Sigmoid colon (tissue), 7 donors: ENCODE measurements at regions of chr11 and their contacts with region 1.

Region 1: GRCh38 chr11:47466701-47467250 is 17.8 kb upstream of the RAPSN start:
- DNase-seq: peak; percentile 82
- H3K4me3 ChIP-seq: no peak overlapping the region
- H3K27ac ChIP-seq: peak overlapping the region; percentile 64 to 78 (median 71)
- H3K4me1 ChIP-seq: peaks cover 0 to 70% (median 64%) of the 10 kb centered on the region in 4 donors
- H3K27me3 ChIP-seq: no peaks in the 10 kb centered on the region
- CTCF ChIP-seq: no peak
- EP300 ChIP-seq: no peak
- POLR2A ChIP-seq: no peak

Region 2: DNA sequence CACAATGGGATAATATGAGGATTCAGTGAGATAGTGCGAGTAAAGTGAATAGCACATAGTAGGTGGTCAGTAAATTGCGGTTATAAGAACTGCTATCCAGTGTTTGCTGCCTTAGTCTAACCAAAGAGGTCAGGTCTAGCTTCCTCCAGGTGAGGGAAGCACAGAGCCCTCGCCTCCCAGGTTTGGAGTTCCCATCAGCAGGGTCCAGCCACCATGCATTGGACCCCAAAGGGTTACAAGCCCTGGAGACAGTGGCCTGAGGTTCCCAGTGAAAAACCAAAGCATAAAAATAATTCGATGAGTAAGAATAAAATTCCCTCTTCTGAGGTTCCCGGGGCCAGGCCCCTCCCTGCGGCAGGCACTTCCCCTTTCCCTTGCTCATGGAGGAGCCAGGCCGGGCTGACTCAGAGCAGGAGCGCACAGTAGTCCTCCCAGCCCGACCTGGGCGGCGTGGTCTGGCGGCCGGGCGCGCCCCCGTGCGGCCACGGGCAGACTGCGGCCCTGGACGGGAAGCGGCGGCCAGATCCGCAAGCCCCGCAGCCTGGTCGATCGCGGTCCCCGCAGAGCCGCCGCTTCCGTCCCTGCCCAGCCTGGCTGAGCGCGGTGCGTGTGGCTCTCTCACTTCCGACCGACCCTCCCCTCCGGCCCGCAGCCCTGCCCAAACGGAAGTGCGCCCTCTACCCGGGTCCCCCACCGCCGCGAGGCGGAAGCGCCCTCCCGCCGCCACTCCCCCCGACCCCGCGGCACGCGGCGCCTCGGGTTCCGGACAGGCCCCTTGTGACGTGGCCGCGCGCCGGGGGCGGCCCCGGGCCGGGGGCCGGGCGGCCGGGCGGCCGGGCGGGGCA is 58.8 kb before region 1 on chr11 and contains the start of gene SLC39A13:
- intact Hi-C with region 1: no loop called
- DNase-seq: peak; percentile 98
- H3K4me3 ChIP-seq: peak within 1 kb of the TSS; percentile 61 to 85 (median 77)
- H3K27ac ChIP-seq: peak within 1 kb of the TSS; percentile 84 to 96 (median 95)
- H3K4me1 ChIP-seq: peaks cover 0 to 44% (median 29%) of the 10 kb centered on the region in 4 donors
- H3K27me3 ChIP-seq: no peaks in the 10 kb centered on the region
- CTCF ChIP-seq: peak; percentile 30 to 75 (median 63)
- EP300 ChIP-seq: peak in 1 of 4 donors; percentile 20
- POLR2A ChIP-seq: peak; percentile 57 to 58
- total RNA-seq, gene SLC39A13: 38.2 to 87.5 (median 54.0) TPM

Region 3: GRCh38 chr11:47480762-47481161 is 14.0 kb after region 1 on chr11:
- intact Hi-C with region 1: no loop called
- DNase-seq: no peak
- H3K4me3 ChIP-seq: no peak overlapping the region
- H3K27ac ChIP-seq: no peak overlapping the region
- H3K4me1 ChIP-seq: no peaks in the 10 kb centered on the region
- H3K27me3 ChIP-seq: no peaks in the 10 kb centered on the region
- CTCF ChIP-seq: no peak
- EP300 ChIP-seq: no peak
- POLR2A ChIP-seq: no peak

Region 4: GRCh38 chr11:47499614-47500013 is 32.8 kb after region 1 on chr11:
- intact Hi-C with region 1: no loop called
- DNase-seq: no peak
- H3K4me3 ChIP-seq: no peak overlapping the region
- H3K27ac ChIP-seq: peak overlapping the region in 2 of 4 donors; percentile 41 to 44
- H3K4me1 ChIP-seq: peaks cover 0 to 89% (median 73%) of the 10 kb centered on the region in 4 donors
- H3K27me3 ChIP-seq: no peaks in the 10 kb centered on the region
- CTCF ChIP-seq: no peak
- EP300 ChIP-seq: no peak
- POLR2A ChIP-seq: no peak

Region 5: GRCh38 chr11:47565340-47566148 is 98.8 kb after region 1 on chr11 and contains the start of gene PTPMT1:
- intact Hi-C with region 1: loop called (anchors 5 kb)
- DNase-seq: peak; percentile 87
- H3K4me3 ChIP-seq: peak within 1 kb of the TSS; percentile 63 to 96 (median 80)
- H3K27ac ChIP-seq: peak within 1 kb of the TSS; percentile 72 to 89 (median 81)
- H3K4me1 ChIP-seq: peaks cover 0 to 20% (median 12%) of the 10 kb centered on the region in 4 donors
- H3K27me3 ChIP-seq: no peaks in the 10 kb centered on the region
- CTCF ChIP-seq: no peak
- EP300 ChIP-seq: no peak
- POLR2A ChIP-seq: no peak
- total RNA-seq, gene PTPMT1: 100.0 to 152 (median 130) TPM